ENCODE measurements at regions of chr10 and their contacts with region 1.

Region 1: GRCh38 chr10:69004821-69005220 is 16.2 kb downstream of the KIFBP start:
- DNase-seq: no peak
- H3K4me3 Mint-ChIP-seq: no peak overlapping the region
- H3K27ac Mint-ChIP-seq: no peak overlapping the region
- H3K4me1 Mint-ChIP-seq: peaks cover 4% of the 10 kb centered on the region
- H3K27me3 Mint-ChIP-seq: no peaks in the 10 kb centered on the region

Region 2: GRCh38 chr10:68938119-68938518 is 66.7 kb before region 1 on chr10:
- CTCF ChIA-PET with region 1: no interaction called
- DNase-seq: no peak
- H3K4me3 Mint-ChIP-seq: no peak overlapping the region
- H3K27ac Mint-ChIP-seq: no peak overlapping the region
- H3K4me1 Mint-ChIP-seq: peaks cover 2% of the 10 kb centered on the region
- H3K27me3 Mint-ChIP-seq: no peaks in the 10 kb centered on the region

Region 3: GRCh38 chr10:69042417-69042816 is 37.6 kb after region 1 on chr10:
- CTCF ChIA-PET with region 1: interaction called, 11 read pairs
- DNase-seq: no peak
- H3K4me3 Mint-ChIP-seq: no peak overlapping the region
- H3K27ac Mint-ChIP-seq: no peak overlapping the region
- H3K4me1 Mint-ChIP-seq: peaks cover 30% of the 10 kb centered on the region
- H3K27me3 Mint-ChIP-seq: no peaks in the 10 kb centered on the region

Region 4: GRCh38 chr10:69065406-69066361 is 60.9 kb after region 1 on chr10:
- CTCF ChIA-PET with region 1: interaction called, 11 read pairs
- DNase-seq: no peak
- H3K4me3 Mint-ChIP-seq: no peak overlapping the region
- H3K27ac Mint-ChIP-seq: no peak overlapping the region
- H3K4me1 Mint-ChIP-seq: peaks cover 26% of the 10 kb centered on the region
- H3K27me3 Mint-ChIP-seq: peaks cover 5% of the 10 kb centered on the region

Region 5: DNA sequence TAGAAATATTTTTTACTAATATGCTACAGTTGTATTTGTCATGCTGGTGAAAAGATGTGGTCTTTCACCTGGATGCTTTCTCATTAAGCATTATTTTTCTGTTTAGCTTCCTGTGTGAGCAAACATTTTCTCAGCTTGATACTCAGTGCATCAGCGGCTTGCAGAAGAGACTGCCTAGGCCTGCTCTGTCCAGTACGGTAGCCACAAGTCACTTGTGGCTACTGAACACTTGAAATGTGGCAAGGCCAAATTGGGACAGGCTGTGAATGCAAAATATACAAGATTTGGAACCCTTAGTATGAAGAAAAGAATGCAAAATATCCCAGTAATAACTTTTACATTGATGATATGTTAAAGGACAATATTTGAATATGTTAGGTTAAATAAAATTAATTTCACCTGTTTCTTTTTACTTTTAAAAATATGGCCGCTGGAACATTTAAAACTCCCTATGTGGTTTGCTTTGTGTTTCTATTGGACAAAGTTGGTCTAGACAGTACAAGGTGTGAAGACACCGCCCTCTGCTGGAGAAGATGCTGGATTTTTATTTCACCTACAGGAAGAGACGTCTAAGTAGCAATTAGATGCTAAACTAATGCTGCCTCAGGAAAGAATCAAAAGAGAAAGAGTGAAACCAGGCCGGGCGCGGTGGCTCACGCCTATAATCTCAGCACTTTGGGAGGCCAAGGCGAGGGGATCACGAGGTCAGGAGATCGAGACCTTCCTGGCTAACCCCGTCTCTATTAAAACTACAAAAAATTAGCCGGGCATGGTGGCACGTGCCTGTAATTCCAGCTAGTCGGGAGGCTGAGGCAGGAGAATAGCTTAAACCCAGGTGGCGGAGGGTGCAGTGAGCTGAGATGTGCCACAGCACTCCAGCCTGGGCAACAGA is 88.4 kb after region 1 on chr10:
- CTCF ChIA-PET with region 1: interaction called, 142 read pairs
- DNase-seq: peak; percentile 92
- H3K4me3 Mint-ChIP-seq: peak overlapping the region; percentile 30
- H3K27ac Mint-ChIP-seq: peak overlapping the region; percentile 73
- H3K4me1 Mint-ChIP-seq: peaks cover 49% of the 10 kb centered on the region
- H3K27me3 Mint-ChIP-seq: no peaks in the 10 kb centered on the region

Region 6: GRCh38 chr10:69123747-69124562 is 119.1 kb after region 1 on chr10 and contains the start of gene VPS26A:
- CTCF ChIA-PET with region 1: interaction called, 21 read pairs
- DNase-seq: peak; percentile 99
- H3K4me3 Mint-ChIP-seq: peak within 1 kb of the TSS; percentile 88
- H3K27ac Mint-ChIP-seq: peak within 1 kb of the TSS; percentile 96
- H3K4me1 Mint-ChIP-seq: peaks cover 28% of the 10 kb centered on the region
- H3K27me3 Mint-ChIP-seq: peaks cover 13% of the 10 kb centered on the region

Region 7: GRCh38 chr10:69515699-69516259 is 511.0 kb after region 1 on chr10:
- CTCF ChIA-PET with region 1: no interaction called
- DNase-seq: peak; percentile 87
- H3K4me3 Mint-ChIP-seq: no peak overlapping the region
- H3K27ac Mint-ChIP-seq: peak overlapping the region; percentile 50
- H3K4me1 Mint-ChIP-seq: no peaks in the 10 kb centered on the region
- H3K27me3 Mint-ChIP-seq: peaks cover 44% of the 10 kb centered on the region